ENCODE measurements at regions of chr19 and their contacts with region 1.

Region 1: DNA sequence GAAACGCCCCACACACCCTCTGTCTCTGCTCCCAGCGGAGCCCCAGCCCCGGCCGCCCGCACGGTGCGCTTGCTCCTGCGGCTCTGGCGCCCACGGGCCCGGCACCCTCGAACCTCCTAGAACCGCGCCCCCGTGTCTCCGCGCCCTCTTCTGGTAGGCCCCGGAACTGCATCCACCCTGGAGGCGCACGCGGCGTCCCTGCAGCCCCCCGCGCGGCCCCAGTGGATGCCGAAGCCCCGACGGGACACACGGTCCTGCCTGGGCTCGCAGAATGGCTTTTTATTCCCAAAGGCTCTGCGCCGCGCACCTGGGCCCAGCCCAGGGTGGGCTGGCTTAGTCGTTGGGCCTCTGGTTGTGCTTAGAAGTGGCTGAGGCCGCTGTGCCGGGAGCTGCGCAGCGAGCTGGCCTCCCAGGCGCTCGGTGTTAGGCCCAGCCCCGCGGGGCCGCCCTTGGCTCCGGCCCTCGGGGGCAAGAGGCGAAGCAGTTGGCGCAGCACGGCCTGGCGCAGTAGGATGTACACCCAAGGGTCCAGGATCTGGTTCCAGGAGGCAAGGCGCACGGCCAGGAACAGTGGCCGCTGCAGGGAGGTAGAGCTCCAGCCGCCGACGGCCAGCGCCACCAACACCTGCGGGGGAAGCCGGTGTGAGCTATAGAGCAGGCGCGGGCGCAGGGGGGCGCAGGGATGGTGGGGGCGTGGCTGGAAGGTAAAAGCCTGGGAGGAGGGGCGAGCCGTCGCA is 2.8 kb downstream of the PTGER1 start:
- DNase-seq: peak; percentile 59
- H3K4me3 Mint-ChIP-seq: no peak overlapping the region
- H3K27ac Mint-ChIP-seq: no peak overlapping the region
- H3K4me1 Mint-ChIP-seq: peaks cover 14% of the 10 kb centered on the region
- H3K27me3 Mint-ChIP-seq: no peaks in the 10 kb centered on the region
- CTCF ChIP-seq: peak; percentile 98

Region 2: DNA sequence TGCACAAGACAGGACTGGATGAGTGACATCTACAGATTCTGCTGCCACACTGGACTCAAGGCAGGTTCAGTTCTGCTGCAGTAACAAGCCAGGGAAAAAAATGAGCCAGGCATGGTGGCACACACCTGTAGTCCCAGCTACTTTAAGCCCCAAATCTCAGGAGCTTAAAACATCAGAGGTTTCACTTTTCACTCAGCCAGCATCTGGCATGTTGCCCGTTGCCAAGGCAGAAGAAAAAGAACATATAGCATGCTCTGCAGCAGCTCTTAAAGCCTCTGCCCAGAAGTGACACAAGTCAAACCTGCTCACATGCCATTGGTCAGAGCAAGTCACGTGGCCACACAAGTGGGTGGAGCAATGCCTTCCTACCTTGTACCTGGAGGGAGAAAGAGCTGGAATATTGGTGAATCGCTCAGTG is 105.9 kb before region 1 on chr19:
- CTCF ChIA-PET with region 1: no interaction called
- POLR2A ChIA-PET with region 1: no interaction called
- intact Hi-C with region 1: loop called (anchors 5 kb)
- DNase-seq: peak; percentile 94
- H3K4me3 Mint-ChIP-seq: no peak overlapping the region
- H3K27ac Mint-ChIP-seq: peak overlapping the region; percentile 46
- H3K4me1 Mint-ChIP-seq: peaks cover 20% of the 10 kb centered on the region
- H3K27me3 Mint-ChIP-seq: no peaks in the 10 kb centered on the region
- CTCF ChIP-seq: no peak

Region 3: GRCh38 chr19:14432791-14433553 is 39.4 kb before region 1 on chr19 and contains the start of gene PKN1:
- CTCF ChIA-PET with region 1: no interaction called
- POLR2A ChIA-PET with region 1: no interaction called
- intact Hi-C with region 1: loop called (anchors 5 kb)
- DNase-seq: no peak
- H3K4me3 Mint-ChIP-seq: peak within 1 kb of the TSS; percentile 63
- H3K27ac Mint-ChIP-seq: peak within 1 kb of the TSS; percentile 0
- H3K4me1 Mint-ChIP-seq: peaks cover 10% of the 10 kb centered on the region
- H3K27me3 Mint-ChIP-seq: no peaks in the 10 kb centered on the region
- CTCF ChIP-seq: no peak
- total RNA-seq, gene PKN1: 94.8 and 141 TPM in 2 replicates

Region 4: DNA sequence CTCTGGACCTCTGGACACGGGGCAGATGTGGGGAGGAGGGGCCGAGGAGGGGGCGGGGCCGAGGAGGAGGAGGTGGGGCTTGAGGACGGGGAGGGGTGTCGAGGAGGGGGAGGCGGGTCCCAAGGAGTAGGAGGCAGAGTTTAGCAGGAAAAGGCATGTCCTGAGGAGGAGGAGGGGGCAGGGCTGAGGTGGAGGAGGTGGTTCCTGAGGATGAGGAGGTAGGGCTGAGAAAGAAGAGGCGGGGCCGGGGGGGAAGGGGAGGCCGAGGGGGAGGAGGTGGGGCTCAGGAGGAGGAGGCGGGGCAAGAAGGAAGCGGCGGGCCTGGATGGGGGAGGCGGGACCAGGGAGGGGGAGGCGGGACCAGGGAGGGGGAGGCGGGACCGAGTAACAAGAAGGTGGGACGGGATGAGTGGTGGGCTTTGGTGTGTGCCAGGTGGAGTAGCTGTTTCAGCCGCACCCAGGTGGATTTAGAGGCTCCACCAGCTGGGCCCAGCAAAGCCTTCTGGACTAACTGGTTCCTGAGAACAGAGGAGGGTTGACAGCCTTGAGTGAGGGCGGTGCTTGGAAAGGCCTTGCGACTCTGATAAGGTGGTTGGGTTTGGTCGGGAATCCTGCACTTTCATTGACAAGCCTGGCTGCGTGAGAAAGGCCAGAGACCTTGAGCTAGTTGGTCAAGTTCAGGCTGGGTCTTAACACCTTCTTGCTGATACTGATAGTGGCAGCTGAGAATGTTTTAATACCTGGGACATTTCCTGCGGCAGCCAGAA is 64.7 kb after region 1 on chr19:
- CTCF ChIA-PET with region 1: no interaction called
- POLR2A ChIA-PET with region 1: no interaction called
- intact Hi-C with region 1: no loop called
- DNase-seq: peak; percentile 93
- H3K4me3 Mint-ChIP-seq: peak overlapping the region; percentile 33
- H3K27ac Mint-ChIP-seq: no peak overlapping the region
- H3K4me1 Mint-ChIP-seq: no peaks in the 10 kb centered on the region
- H3K27me3 Mint-ChIP-seq: no peaks in the 10 kb centered on the region
- CTCF ChIP-seq: no peak

Measured in MCF 10A (cell line).